ENCODE measurements at regions of chr11 and their contacts with region 1.

Region 1: GRCh38 chr11:12331239-12331874 is 46.0 kb upstream of the PARVA start:
- DNase-seq: peak; percentile 68 to 71 (median 68)
- H3K4me3 ChIP-seq: no peak overlapping the region
- H3K4me3 Mint-ChIP-seq: no peak overlapping the region
- H3K27ac ChIP-seq: no peak overlapping the region
- H3K27ac Mint-ChIP-seq: peak overlapping the region in 1 of 7 donors; percentile 25
- H3K4me1 ChIP-seq: no peaks in the 10 kb centered on the region
- H3K4me1 Mint-ChIP-seq: peaks cover 0 to 5% (median 3%) of the 10 kb centered on the region in 4 donors
- H3K27me3 ChIP-seq: no peaks in the 10 kb centered on the region
- H3K27me3 Mint-ChIP-seq: no peaks in the 10 kb centered on the region

Region 2: DNA sequence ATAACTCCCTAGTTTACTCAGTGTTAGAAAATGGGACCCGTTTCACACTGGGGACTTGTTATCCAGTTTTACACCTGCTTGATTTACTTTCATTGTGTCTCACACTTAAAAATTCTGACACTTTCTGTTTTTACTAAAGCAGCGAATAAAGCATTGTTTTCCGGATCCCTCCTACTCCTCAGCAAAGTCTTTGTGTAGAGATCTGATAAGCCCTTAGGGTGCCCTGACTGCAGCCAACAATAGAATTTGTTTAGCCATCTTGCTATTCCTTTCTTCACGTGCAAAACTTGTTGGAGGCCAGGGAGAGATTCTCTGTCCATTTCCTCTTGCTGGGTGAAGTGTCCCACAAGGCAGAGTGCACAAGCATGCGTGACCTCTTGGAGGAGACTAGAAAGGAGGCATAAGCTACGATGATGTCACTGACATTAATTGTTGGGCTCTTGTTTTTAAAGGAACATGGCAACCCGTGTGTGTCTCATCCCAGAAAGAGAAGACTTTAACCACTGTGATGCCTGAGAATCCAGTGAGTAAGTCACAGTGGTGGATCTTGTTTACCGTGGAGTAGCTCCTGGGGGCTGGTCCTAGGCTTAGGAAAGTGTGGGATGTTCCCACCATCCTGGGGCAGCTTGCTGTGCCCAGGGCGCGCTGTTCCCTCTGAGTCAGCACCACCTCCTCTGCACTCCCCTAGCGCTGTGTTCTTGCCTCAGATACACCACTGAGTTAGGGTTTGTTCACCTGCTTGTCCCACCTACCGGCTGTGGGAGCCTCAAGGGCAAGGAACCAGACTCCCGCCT is 193.2 kb before region 1 on chr11:
- CTCF ChIA-PET with region 1: no interaction called
- POLR2A ChIA-PET with region 1: no interaction called
- intact Hi-C with region 1: no loop called
- DNase-seq: no peak
- H3K4me3 ChIP-seq: no peak overlapping the region
- H3K4me3 Mint-ChIP-seq: peak overlapping the region in 5 of 8 donors; percentile 19 to 45 (median 32)
- H3K27ac ChIP-seq: no peak overlapping the region
- H3K27ac Mint-ChIP-seq: peak overlapping the region in 6 of 7 donors; percentile 36 to 81 (median 61)
- H3K4me1 ChIP-seq: peaks cover 43% of the 10 kb centered on the region
- H3K4me1 Mint-ChIP-seq: peaks cover 40 to 61% (median 51%) of the 10 kb centered on the region in 4 donors
- H3K27me3 ChIP-seq: no peaks in the 10 kb centered on the region
- H3K27me3 Mint-ChIP-seq: no peaks in the 10 kb centered on the region

Region 3: DNA sequence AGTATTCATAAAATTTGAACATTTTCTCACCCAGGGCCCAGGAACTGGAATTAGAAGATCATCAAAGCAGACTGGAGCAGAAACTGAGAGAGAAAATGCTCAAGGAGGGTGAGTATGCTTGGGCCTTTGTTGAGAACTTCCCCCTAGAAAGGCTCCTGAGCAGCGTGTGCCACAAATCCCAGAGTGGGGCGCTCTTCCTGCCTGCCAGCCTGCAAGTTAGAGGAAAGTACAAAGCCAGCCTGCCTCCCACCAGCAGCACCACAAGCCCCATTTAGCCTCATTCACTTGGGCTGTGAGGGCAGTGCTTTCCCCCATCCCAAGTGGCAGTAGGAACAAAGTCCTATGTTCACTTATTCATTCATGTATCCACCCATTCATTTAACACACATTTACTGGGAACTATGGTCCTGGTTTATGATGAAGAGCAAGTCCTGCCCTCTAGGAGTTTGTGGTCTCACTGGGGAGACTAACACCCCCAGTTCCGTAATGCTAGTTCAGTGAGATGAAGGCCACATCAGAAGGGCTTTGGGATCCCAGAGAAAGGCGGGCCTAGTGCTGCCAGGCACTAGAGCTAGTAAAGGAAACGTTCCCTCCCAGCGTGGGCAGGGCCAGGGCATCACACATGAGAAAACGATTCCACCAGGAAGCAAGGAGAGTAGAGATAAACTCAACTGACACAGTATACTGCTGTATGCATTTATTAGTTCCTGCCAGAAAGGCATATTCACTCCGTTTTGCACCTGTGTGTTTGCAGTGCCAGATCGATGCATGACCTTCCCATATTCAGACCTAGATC is 23.6 kb after region 1 on chr11:
- CTCF ChIA-PET with region 1: interaction called, 24 read pairs
- POLR2A ChIA-PET with region 1: interaction called, 5 read pairs
- intact Hi-C with region 1: no loop called
- DNase-seq: no peak
- H3K4me3 ChIP-seq: no peak overlapping the region
- H3K4me3 Mint-ChIP-seq: peak overlapping the region in 1 of 8 donors; percentile 3
- H3K27ac ChIP-seq: no peak overlapping the region
- H3K27ac Mint-ChIP-seq: peak overlapping the region in 5 of 7 donors; percentile 10 to 87 (median 47)
- H3K4me1 ChIP-seq: peaks cover 23% of the 10 kb centered on the region
- H3K4me1 Mint-ChIP-seq: peaks cover 28 to 39% (median 32%) of the 10 kb centered on the region in 4 donors
- H3K27me3 ChIP-seq: no peaks in the 10 kb centered on the region
- H3K27me3 Mint-ChIP-seq: no peaks in the 10 kb centered on the region

Region 4: DNA sequence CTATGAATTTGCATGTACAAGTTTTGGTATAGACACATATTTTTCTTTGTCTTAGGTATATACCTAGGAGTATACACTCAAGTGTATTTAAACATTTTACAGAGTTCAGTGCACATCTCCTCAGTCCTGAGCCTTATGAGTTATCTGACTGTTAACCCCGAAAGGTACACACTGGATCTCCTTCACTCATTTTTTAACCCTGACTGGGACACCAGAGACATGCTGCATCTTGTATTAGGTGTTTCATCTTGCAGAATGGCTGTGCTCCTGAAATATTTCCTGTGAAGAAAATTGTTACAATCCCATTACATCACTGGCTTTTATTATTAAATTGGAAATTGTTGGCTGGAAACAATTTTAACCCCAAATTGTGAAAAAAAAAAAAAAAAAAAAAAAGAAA is 61.3 kb after region 1 on chr11:
- CTCF ChIA-PET with region 1: interaction called, 10 read pairs
- POLR2A ChIA-PET with region 1: no interaction called
- intact Hi-C with region 1: no loop called
- DNase-seq: no peak
- H3K4me3 ChIP-seq: no peak overlapping the region
- H3K4me3 Mint-ChIP-seq: no peak overlapping the region
- H3K27ac ChIP-seq: no peak overlapping the region
- H3K27ac Mint-ChIP-seq: no peak overlapping the region
- H3K4me1 ChIP-seq: peaks cover under 1% of the 10 kb centered on the region
- H3K4me1 Mint-ChIP-seq: peaks cover 4 to 15% (median 10%) of the 10 kb centered on the region in 4 donors
- H3K27me3 ChIP-seq: no peaks in the 10 kb centered on the region
- H3K27me3 Mint-ChIP-seq: peaks cover 0 to 3% of the 10 kb centered on the region in 2 donors

Region 5: DNA sequence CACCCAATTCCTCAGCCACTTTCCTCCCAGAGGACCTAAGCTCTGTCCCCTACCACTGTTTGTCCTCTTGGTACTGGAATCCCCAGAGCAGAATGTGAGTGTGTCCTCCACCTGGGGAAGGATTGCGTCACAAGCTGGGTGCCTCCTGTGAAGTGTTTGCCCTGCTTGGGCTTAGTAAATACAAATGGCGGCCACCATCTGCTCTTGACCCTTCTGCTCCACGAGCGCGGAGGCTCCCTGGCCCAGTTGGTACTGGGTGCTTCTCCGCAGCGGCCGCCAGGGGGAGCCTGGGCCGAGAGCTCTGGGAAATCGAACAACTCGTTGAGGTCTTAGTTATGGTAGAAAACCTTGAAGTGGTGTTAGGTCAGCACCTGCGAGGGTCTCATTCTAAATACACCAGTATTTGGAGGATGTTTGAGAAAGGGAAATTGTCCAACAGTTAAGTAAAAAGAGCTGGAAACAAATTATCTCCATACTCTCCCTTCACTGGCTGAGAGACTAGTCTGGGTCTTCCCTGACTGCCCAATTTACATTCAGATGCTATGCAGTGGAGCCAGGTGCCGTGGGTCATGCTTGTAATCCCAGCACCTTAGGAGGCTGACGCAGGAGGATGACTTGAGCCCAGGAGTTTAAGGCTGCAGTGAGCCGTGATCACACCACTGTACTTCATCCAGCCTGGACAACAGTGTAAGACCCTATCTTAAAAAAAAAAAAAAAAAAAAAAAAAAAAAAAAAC is 268.2 kb after region 1 on chr11:
- CTCF ChIA-PET with region 1: interaction called, 22 read pairs
- POLR2A ChIA-PET with region 1: interaction called, 3 read pairs
- intact Hi-C with region 1: loop called (anchors 1 kb)
- DNase-seq: peak in 3 of 5 donors; percentile 0 to 23 (median 8)
- H3K4me3 ChIP-seq: no peak overlapping the region
- H3K4me3 Mint-ChIP-seq: no peak overlapping the region
- H3K27ac ChIP-seq: no peak overlapping the region
- H3K27ac Mint-ChIP-seq: no peak overlapping the region
- H3K4me1 ChIP-seq: peaks cover 19% of the 10 kb centered on the region
- H3K4me1 Mint-ChIP-seq: peaks cover 14 to 26% (median 19%) of the 10 kb centered on the region in 4 donors
- H3K27me3 ChIP-seq: no peaks in the 10 kb centered on the region
- H3K27me3 Mint-ChIP-seq: peaks cover 15 to 22% of the 10 kb centered on the region in 2 donors

Region 6: GRCh38 chr11:12963792-12964536 is 632.6 kb after region 1 on chr11:
- CTCF ChIA-PET with region 1: interaction called, 4 read pairs
- POLR2A ChIA-PET with region 1: no interaction called
- intact Hi-C with region 1: loop called (anchors 1 kb)
- DNase-seq: peak; percentile 41 to 60 (median 52)
- H3K4me3 ChIP-seq: no peak overlapping the region
- H3K4me3 Mint-ChIP-seq: no peak overlapping the region
- H3K27ac ChIP-seq: no peak overlapping the region
- H3K27ac Mint-ChIP-seq: peak overlapping the region in 1 of 7 donors; percentile 31
- H3K4me1 ChIP-seq: no peaks in the 10 kb centered on the region
- H3K4me1 Mint-ChIP-seq: no peaks in the 10 kb centered on the region
- H3K27me3 ChIP-seq: no peaks in the 10 kb centered on the region
- H3K27me3 Mint-ChIP-seq: peaks cover 18 to 21% of the 10 kb centered on the region in 2 donors